ENCODE measurements at regions of chr20 and their contacts with region 1.

Region 1: DNA sequence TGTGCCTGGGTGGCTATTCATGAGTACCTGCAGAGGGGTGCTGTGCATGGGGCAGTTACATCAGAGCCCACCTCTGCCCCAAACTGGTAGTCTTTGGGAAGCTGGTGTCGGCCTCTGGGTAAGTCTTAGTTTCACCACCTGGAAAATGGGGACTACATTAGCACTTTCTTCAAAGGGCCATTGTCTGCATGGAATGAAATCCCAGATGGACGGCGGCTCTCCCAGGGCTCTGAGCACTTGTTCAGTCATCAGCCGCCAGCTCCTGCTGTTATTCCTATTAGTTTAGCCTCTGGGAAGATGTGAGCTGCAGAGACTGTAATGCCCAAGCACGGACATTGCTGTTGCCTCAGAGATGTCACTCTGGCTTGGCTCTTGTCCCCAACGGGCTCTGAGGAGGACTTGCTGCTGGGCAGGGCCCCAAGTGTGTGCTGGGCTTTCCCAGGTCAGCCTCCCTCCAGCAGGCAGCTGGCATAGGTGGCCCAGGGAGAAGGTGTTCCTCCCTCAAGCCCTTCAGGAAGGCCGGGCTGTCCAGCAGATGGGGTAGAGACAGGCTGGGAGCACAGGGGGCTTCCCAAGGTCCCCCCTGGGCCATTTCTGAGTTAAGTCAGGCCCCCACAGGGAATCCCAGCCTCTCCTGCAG is 268.3 kb downstream of the TFAP2C start:
- DNase-seq: no peak
- H3K4me3 ChIP-seq: no peak overlapping the region
- H3K27ac ChIP-seq: no peak overlapping the region
- H3K4me1 ChIP-seq: no peaks in the 10 kb centered on the region
- H3K27me3 ChIP-seq: no peaks in the 10 kb centered on the region
- CTCF ChIP-seq: no peak
- EP300 ChIP-seq: no peak
- POLR2A ChIP-seq: no peak

Region 2: DNA sequence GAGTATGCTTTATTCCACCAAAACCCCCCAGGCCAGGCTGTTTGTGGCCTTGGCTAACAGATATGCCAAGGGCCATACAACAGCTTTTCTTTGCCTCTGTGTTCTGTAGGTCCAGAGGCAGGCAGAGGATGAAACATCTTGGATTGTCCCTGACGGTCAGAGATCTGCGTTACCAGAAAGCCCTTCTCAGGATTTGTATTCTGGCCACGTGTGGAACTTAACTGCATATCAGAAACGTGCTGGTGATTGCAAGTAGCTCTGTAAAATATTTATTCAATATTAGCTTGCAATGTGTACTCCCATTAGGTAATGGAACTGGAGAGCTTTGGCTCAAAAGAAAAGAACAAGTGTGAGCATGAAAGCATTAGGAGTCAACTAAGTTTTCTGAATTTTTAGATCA is 1167.1 kb before region 1 on chr20:
- in situ Hi-C with region 1: no loop called
- intact Hi-C with region 1: loop called (anchors 5 kb)
- DNase-seq: no peak
- H3K4me3 ChIP-seq: no peak overlapping the region
- H3K27ac ChIP-seq: no peak overlapping the region
- H3K4me1 ChIP-seq: no peaks in the 10 kb centered on the region
- H3K27me3 ChIP-seq: no peaks in the 10 kb centered on the region
- CTCF ChIP-seq: no peak
- EP300 ChIP-seq: no peak
- POLR2A ChIP-seq: no peak

Region 3: DNA sequence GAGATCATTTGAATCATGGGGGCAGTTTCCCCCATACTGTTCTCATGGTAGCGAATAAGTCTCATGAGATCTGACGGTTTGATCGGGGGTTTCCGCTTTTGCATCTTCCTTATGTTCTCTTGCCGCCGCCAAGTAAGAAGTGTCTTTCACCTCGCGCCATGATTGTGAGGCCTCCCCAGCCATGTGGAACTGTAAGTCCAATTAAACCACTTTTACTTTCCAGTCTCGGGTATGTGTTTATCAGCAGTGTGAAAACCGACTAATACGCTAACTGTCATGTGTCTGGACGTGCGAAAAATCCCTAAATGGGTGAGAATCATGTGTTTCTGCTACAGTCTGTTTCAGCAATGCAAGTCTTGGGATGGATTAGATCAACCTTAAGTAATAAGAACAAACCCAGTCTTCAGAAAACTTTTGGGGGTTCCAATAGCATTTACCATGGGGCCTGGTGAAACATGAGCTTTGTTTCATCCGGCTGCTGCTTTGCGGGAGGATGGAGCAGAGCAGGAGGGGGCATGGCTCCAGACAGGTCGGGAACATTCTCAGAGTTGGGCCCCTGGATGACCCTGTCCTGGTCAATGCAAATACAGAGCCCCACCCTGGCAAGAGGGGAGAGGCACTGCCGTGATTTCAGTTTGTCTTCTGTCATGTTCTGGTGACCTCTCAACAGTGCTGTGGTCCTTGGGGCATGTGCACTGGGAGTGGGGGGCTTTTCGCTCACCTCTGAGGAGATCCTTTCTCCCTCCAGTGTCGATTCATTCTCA is 586.0 kb after region 1 on chr20:
- in situ Hi-C with region 1: no loop called
- intact Hi-C with region 1: no loop called
- DNase-seq: no peak
- H3K4me3 ChIP-seq: no peak overlapping the region
- H3K27ac ChIP-seq: no peak overlapping the region
- H3K4me1 ChIP-seq: peaks cover 6 to 15% (median 11%) of the 10 kb centered on the region in 4 donors
- H3K27me3 ChIP-seq: no peaks in the 10 kb centered on the region
- CTCF ChIP-seq: no peak
- EP300 ChIP-seq: no peak
- POLR2A ChIP-seq: no peak

Measured in transverse colon (tissue), 4 donors.